Naive thymus-derived CD8-positive, alpha-beta T cell (primary cell): ENCODE measurements at regions of chr3 and their contacts with region 1.

Region 1: GRCh38 chr3:53347261-53348064 is at the start of gene DCP1A:
- DNase-seq: peak; percentile 86 to 97 (median 95)
- ATAC-seq: peak; percentile 94 to 95
- H3K4me3 Mint-ChIP-seq: peak within 1 kb of the TSS; percentile 95 to 100 (median 98)
- H3K27ac Mint-ChIP-seq: peak within 1 kb of the TSS; percentile 97 to 100 (median 99)
- H3K4me1 Mint-ChIP-seq: peaks cover 17 to 45% (median 39%) of the 10 kb centered on the region in 4 donors
- H3K27me3 Mint-ChIP-seq: no peaks in the 10 kb centered on the region
- polyA plus RNA-seq, gene DCP1A: 68.5 to 80.5 (median 72.5) TPM

Region 2: DNA sequence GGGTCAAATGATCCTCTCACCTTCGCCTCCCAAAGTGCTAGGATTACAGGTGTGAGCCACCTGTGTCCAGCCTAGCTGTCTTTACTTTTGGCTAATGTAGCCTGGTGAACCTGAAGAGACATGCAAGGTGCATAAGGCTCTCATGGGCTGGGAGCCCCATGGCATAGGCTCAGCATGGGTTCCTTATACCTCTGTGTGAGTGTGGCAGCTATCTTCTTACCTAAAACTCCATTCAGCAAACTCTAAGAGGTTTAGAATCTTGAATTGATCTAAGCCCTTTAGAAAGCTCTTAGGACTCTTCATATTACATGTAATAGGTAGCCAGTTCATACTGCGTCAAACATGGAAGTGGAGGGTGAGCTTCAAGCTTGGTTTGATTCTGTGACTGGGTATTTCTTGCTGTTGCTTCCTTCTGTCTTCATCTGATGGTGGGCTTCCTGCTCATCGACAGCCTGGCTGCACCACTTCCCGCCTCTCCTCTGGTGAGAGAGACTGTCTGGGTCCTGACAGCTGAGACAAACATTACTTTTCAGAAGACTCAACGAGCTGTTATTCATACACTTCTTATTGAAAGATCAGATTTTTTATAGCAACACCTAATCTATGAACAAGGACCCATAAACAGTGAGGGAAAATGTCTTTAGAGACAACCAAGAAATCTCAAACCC is 72.4 kb before region 1 on chr3:
- POLR2A ChIA-PET with region 1: interaction called, 11 read pairs
- DNase-seq: peak in 7 of 10 donors; percentile 31 to 73 (median 52)
- ATAC-seq: peak; percentile 93 to 98
- H3K4me3 Mint-ChIP-seq: peak overlapping the region; percentile 20 to 75 (median 62)
- H3K27ac Mint-ChIP-seq: peak overlapping the region; percentile 79 to 98 (median 93)
- H3K4me1 Mint-ChIP-seq: peaks cover 7 to 12% (median 9%) of the 10 kb centered on the region in 4 donors
- H3K27me3 Mint-ChIP-seq: peaks cover 0 to 1% (median 0%) of the 10 kb centered on the region in 5 donors

Region 3: DNA sequence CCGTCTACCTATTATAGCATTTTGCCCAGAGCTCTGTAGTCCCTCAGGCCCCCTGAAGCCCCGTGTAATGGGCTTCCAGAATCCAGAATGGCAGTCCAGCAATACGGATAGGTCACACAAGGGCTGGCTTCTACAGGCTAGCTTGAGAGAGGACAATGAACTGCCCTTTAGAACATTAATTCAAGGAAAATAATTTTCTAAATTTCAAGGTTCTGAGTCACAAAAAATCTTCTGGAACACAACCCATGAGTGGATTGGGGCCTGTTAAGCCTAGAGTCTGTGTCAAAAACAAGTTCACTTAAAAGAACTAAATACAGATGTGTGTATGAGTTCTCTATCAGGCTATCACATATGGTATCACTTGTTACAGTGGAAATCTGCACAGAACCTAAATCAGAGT is 28.9 kb before region 1 on chr3:
- POLR2A ChIA-PET with region 1: no interaction called
- DNase-seq: no peak
- ATAC-seq: no peak
- H3K4me3 Mint-ChIP-seq: no peak overlapping the region
- H3K27ac Mint-ChIP-seq: no peak overlapping the region
- H3K4me1 Mint-ChIP-seq: peaks cover 6 to 13% (median 6%) of the 10 kb centered on the region in 4 donors
- H3K27me3 Mint-ChIP-seq: no peaks in the 10 kb centered on the region

Region 4: GRCh38 chr3:53597136-53597915 is 249.9 kb after region 1 on chr3:
- POLR2A ChIA-PET with region 1: no interaction called
- DNase-seq: peak in 1 of 10 donors; percentile 6
- ATAC-seq: peak in 1 of 2 donors; percentile 20
- H3K4me3 Mint-ChIP-seq: no peak overlapping the region
- H3K27ac Mint-ChIP-seq: peak overlapping the region in 1 of 10 donors; percentile 24
- H3K4me1 Mint-ChIP-seq: peaks cover 2 to 12% (median 8%) of the 10 kb centered on the region in 4 donors
- H3K27me3 Mint-ChIP-seq: peaks cover 0 to 7% (median 0%) of the 10 kb centered on the region in 5 donors

Region 5: GRCh38 chr3:53891497-53892285 is 544.2 kb after region 1 on chr3 and contains the start of gene SELENOK:
- POLR2A ChIA-PET with region 1: interaction called, 20 read pairs
- DNase-seq: peak; percentile 84 to 99 (median 96)
- ATAC-seq: peak; percentile 88 to 93
- H3K4me3 Mint-ChIP-seq: peak within 1 kb of the TSS; percentile 91 to 98 (median 94)
- H3K27ac Mint-ChIP-seq: peak within 1 kb of the TSS; percentile 97 to 100 (median 99)
- H3K4me1 Mint-ChIP-seq: peaks cover 36 to 60% (median 51%) of the 10 kb centered on the region in 4 donors
- H3K27me3 Mint-ChIP-seq: peaks cover 0 to 15% (median under 1%) of the 10 kb centered on the region in 5 donors
- polyA plus RNA-seq, gene SELENOK: 102 to 176 (median 117) TPM